ENCODE measurements at regions of chr9 and their contacts with region 1.

Region 1: DNA sequence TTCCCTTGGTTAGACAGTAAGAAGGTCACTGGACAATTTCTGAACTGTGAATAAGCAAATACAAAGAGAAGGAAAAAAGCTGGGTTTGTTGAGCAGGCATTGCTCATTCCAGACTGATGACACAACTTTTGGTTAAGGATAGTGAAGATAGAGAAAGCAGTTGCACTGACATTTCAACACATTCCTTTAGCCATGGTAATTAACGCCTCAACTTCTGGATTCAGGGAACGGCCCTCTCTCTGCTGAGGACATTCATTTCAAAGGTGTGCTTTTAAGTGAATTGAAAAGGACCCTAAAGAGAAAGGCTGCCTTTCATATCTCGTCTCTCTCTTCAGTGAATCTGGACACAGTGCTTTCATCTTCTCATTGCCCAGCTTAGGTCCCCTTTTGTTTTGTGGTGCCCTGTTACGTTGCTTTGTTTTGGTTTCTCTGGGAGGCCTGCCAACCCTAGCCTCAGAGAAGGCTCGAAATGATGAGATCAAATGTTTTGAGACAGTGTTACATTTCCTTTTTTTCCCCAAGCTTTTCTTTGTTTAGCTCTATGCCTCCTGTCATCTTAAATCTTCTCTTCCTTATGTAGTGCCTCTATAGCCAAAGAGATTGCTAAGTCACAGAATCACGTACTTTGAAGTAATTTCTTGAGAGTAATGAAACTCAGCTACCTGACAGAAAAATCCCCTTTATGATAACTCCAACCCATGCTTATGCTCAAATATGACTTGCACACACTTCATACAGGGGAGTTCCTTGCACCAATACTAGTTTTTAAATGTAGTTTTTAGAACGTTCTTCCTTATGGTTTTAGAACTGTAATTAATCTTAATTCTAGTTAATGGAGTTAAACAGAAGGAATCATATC is 94.4 kb upstream of the IFNE start:
- DNase-seq: peak; percentile 83
- ATAC-seq: peak; percentile 65
- H3K4me3 ChIP-seq: peak overlapping the region; percentile 60
- H3K27ac ChIP-seq: peak overlapping the region; percentile 81
- H3K4me1 ChIP-seq: peaks cover 59% of the 10 kb centered on the region
- H3K27me3 ChIP-seq: no peaks in the 10 kb centered on the region
- CTCF ChIP-seq: no peak

Region 2: DNA sequence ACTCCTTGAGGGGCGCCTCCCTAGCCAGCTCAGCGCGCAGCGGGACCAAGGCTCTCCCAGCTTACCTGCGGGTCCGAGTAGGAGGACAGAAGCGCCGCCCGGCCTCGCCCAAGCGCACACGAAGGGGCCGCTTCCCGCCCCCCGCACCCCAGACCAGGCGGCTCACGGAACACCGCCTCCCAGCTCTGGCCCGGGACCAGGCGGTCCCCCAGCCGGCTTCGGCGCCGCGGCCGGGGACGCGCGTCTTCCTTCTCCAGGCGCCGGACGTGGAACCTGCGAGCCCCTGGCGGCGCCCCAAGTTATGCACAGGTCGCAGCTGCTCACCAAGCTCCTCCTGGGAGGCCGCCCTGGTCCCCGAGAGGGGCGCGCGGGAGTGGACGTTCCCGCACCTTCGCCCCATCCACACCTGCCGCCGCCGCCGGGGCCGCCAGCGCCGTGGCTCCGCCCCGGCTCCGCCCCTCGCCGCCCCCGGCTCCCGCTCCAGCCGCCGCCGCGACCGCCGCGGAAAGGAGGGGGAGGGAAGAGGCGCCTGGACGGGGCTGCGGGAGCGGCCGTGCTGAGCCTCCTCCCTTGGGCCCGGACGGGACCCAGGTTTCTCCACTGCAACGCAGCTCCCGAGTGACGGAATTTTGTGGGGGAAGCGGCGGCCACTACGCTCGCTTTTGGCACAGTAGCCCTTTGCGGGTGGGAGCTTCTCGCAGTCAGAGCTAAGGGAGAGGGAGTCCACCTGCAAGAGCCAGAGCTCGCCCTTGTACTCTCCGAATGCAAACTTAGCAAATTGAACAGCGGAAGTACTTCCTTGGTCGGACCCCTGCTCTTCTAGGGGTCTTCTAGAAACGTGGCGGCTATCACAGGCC is 16.9 kb before region 1 on chr9:
- CTCF ChIA-PET with region 1: no interaction called
- POLR2A ChIA-PET with region 1: interaction called, 4 read pairs
- intact Hi-C with region 1: loop called (anchors 2 kb)
- DNase-seq: peak; percentile 82
- ATAC-seq: peak; percentile 78
- H3K4me3 ChIP-seq: peak overlapping the region; percentile 96
- H3K27ac ChIP-seq: peak overlapping the region; percentile 99
- H3K4me1 ChIP-seq: peaks cover 32% of the 10 kb centered on the region
- H3K27me3 ChIP-seq: no peaks in the 10 kb centered on the region
- CTCF ChIP-seq: no peak

Region 3: DNA sequence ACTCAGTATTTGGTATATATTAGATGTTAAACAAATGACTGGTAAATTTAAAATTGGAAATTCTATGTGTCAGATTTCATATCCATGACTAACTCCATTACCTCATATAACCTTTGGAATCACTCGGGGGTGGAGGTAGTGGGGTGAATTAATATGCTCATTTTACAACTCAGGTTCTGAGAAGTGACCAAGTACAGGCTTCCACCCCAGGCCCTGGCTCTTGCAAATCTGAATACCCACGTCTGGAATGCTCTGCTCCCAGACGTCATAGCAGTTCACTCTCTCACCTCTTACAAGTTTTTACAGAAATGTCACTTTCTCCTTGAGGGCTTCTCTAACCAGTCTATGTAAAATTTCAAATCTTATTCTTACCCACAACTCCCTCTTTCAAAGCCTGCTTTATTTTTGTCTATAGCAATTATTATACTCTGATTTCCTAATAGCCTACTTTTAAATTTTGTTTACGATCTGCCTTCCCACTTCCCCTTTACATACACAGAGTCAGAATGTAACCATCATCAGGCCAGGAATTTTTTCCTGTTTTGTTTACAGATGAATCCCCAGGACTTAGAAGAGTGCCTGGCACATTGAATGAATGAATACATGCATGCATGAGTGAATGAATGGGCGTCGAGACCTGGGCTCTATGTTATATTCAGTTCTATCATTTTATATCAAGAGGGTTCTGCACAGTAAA is 39.7 kb after region 1 on chr9:
- CTCF ChIA-PET with region 1: no interaction called
- POLR2A ChIA-PET with region 1: no interaction called
- intact Hi-C with region 1: loop called (anchors 5 kb)
- DNase-seq: peak; percentile 83
- ATAC-seq: peak; percentile 87
- H3K4me3 ChIP-seq: peak overlapping the region; percentile 35; the same call in 1 of the 2 replicates
- H3K27ac ChIP-seq: peak overlapping the region; percentile 90
- H3K4me1 ChIP-seq: peaks cover 47% of the 10 kb centered on the region
- H3K27me3 ChIP-seq: no peaks in the 10 kb centered on the region
- CTCF ChIP-seq: no peak

Region 4: GRCh38 chr9:21656776-21657674 is 80.5 kb after region 1 on chr9:
- CTCF ChIA-PET with region 1: interaction called, 12 read pairs
- POLR2A ChIA-PET with region 1: no interaction called
- intact Hi-C with region 1: no loop called
- DNase-seq: peak; percentile 94
- ATAC-seq: peak; percentile 84
- H3K4me3 ChIP-seq: peak overlapping the region; percentile 26
- H3K27ac ChIP-seq: peak overlapping the region; percentile 92
- H3K4me1 ChIP-seq: peaks cover 37% of the 10 kb centered on the region
- H3K27me3 ChIP-seq: no peaks in the 10 kb centered on the region
- CTCF ChIP-seq: no peak

Region 5: GRCh38 chr9:21677834-21678233 is 101.3 kb after region 1 on chr9:
- CTCF ChIA-PET with region 1: no interaction called
- POLR2A ChIA-PET with region 1: no interaction called
- intact Hi-C with region 1: loop called (anchors 5 kb)
- DNase-seq: peak; percentile 96
- ATAC-seq: peak; percentile 64
- H3K4me3 ChIP-seq: peak overlapping the region; percentile 52
- H3K27ac ChIP-seq: peak overlapping the region; percentile 99
- H3K4me1 ChIP-seq: peaks cover 76% of the 10 kb centered on the region
- H3K27me3 ChIP-seq: no peaks in the 10 kb centered on the region
- CTCF ChIP-seq: no peak

Measured in PC-3 (cell line).